ENCODE measurements at regions of chr12 and their contacts with region 1.

Region 1: DNA sequence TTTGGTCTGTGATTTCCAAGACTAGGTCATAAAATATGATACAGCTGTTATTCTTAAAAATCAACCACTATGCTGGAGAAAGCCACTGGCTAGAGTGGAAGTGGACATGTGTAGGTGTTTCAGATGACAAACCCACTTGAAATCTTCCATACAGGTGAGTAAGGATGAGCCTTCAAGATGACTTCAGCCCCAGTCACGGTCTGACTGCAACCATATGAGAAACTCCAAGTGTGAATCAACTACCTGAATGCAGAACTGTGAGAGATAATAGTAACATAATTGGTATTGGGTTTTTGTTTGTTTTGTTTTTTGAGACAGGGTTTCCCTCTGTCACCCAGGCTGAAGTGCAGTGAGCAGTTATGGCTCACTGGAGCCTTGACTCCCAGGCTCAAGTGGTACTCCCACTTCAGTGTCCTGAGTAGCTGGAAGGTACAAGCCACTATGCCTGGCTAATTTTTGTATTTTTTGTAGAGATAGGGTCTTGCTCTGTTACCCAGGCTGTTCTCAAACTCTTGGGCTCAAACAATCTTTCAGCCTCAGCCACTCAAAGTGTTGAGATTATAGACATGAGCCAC is 273.3 kb upstream of the LRIG3 start:
- DNase-seq: peak; percentile 91
- H3K4me3 ChIP-seq: no peak overlapping the region
- H3K27ac ChIP-seq: no peak overlapping the region
- H3K4me1 ChIP-seq: no peaks in the 10 kb centered on the region
- H3K27me3 ChIP-seq: no peaks in the 10 kb centered on the region
- CTCF ChIP-seq: no peak

Region 2: DNA sequence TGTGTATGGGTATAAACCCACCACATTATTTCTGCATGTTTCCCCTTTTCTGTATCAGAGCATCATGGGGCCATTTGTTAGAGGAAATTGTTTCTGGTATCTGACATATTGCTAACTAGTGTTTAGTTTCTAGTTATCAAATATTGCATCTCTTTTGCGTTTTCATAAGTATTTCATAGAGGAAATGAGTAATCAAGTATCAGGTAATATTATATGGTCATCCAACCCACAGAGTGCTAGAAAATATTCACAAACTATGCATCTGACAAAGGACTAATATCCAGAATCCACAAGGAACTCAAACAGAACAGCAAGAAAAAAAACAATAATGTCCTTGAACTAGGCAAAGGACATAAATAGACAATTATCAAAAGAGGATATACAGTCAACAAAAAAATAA is 14.3 kb before region 1 on chr12:
- CTCF ChIA-PET with region 1: no interaction called
- dilution Hi-C with region 1: no loop called
- in situ Hi-C with region 1: no loop called
- intact Hi-C with region 1: loop called (anchors 2 kb)
- DNase-seq: peak; percentile 54
- H3K4me3 ChIP-seq: no peak overlapping the region
- H3K27ac ChIP-seq: no peak overlapping the region
- H3K4me1 ChIP-seq: peaks cover 8% of the 10 kb centered on the region
- H3K27me3 ChIP-seq: no peaks in the 10 kb centered on the region
- CTCF ChIP-seq: no peak

Region 3: DNA sequence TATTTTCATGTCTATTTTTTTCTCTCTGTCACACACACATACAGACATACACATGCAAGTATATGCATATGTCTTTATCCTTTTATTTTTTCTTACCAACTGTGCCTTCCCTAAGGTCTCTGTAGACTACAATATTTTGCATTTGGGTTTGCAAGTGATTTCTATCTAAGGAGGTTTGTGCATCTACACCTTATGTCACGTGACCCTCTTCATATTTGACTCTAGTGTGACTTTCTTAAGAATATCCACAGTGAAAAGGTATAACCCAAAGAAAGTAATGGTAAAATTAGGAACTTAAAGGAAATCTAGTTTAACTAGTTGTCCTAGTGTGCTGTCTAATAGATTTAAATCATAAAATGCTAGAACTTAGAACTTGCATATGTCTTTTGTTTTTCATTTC is 25.6 kb after region 1 on chr12:
- CTCF ChIA-PET with region 1: no interaction called
- dilution Hi-C with region 1: no loop called
- in situ Hi-C with region 1: no loop called
- intact Hi-C with region 1: no loop called
- DNase-seq: no peak
- H3K4me3 ChIP-seq: no peak overlapping the region
- H3K27ac ChIP-seq: no peak overlapping the region
- H3K4me1 ChIP-seq: no peaks in the 10 kb centered on the region
- H3K27me3 ChIP-seq: peaks cover 2% of the 10 kb centered on the region
- CTCF ChIP-seq: no peak

Region 4: DNA sequence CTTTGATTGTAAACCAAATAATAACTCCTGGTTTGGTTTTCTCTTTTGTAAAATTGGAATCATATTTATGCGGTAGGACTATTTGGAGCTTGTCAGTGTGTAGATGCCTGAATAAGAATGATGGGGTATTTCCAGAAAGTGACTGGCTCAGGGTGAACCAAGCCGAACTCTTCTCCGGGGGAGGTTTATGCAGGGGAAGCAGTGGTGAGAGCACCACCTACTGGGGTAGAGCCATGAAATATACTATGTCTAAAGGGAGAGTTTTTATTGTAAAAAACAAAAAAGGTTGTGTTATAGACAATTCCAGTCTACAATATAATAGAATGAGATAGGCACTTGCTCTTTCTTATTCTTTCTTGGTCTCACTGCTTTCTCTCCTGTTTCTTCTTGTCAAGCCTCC is 179.4 kb after region 1 on chr12:
- CTCF ChIA-PET with region 1: no interaction called
- dilution Hi-C with region 1: no loop called
- in situ Hi-C with region 1: no loop called
- intact Hi-C with region 1: no loop called
- DNase-seq: peak; percentile 31
- H3K4me3 ChIP-seq: no peak overlapping the region
- H3K27ac ChIP-seq: no peak overlapping the region
- H3K4me1 ChIP-seq: no peaks in the 10 kb centered on the region
- H3K27me3 ChIP-seq: no peaks in the 10 kb centered on the region
- CTCF ChIP-seq: peak; percentile 38 to 57

Measured in mammary epithelial cell (primary cell).